ENCODE measurements at regions of chr11 and their contacts with region 1.

Region 1: GRCh38 chr11:2677127-2677526 is 22.7 kb downstream of the KCNQ1OT1 start:
- DNase-seq: no peak
- ATAC-seq: peak; percentile 68
- H3K4me3 Mint-ChIP-seq: no peak overlapping the region
- H3K27ac Mint-ChIP-seq: peak overlapping the region; percentile 51
- H3K4me1 Mint-ChIP-seq: peaks cover 30% of the 10 kb centered on the region
- H3K27me3 Mint-ChIP-seq: no peaks in the 10 kb centered on the region
- CTCF ChIP-seq: no peak

Region 2: DNA sequence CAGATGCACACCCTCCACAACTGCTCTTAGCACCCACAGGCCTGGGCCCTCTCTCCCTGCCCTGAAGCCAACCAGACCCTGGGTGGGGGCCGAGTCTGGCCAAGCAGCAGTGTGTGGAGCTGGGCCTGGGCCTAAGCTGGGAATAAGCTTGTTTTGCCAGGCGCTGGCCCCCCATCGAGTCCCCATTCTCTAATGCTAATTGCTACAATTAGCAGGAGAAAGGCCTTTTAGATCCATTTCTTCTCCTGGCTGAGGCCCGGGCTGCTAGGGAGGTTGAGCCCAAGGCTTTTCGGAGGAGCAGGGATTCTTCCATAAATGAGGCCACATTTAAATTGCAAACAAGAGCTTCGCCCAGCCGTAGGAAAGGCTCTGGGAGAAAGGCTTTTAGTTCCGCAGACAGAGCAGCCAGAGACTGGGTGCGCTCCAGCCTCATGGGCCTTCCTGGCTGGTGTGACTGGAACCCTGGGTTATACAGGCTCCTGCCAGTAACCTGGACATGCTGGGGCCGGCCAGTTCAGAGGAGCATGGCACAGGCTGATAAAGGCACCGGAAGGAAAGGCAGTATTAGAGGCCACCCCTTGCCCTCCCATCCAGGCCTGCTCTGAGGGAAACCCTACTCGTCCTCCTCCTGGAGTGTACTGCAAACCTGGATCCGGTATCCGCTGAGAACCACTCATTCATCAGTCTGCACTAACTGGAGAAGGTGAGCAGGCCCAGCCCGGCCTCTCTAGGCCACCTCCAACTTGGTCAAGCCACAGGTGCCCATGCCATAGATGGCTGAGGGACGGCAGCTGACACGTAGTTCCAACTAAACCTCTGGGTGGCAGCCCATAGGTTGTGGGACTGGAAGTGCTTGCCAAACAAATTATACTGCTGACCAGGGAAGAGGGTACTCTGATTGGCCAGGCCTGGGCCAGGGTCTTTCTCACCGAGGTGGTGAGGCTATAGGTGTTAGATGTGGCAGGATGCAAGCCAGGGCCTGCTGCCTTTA is 16.4 kb after region 1 on chr11:
- CTCF ChIA-PET with region 1: no interaction called
- POLR2A ChIA-PET with region 1: no interaction called
- intact Hi-C with region 1: loop called (anchors 2 kb)
- DNase-seq: no peak
- ATAC-seq: no peak
- H3K4me3 Mint-ChIP-seq: no peak overlapping the region
- H3K27ac Mint-ChIP-seq: no peak overlapping the region
- H3K4me1 Mint-ChIP-seq: peaks cover 39% of the 10 kb centered on the region
- H3K27me3 Mint-ChIP-seq: no peaks in the 10 kb centered on the region
- CTCF ChIP-seq: no peak

Measured in activated B cell treated with CpG ODN at 0.5 μM for 24 hours (primary cell).